PC-3 (cell line): ENCODE measurements at regions of chr5 and their contacts with region 1.

Region 1: DNA sequence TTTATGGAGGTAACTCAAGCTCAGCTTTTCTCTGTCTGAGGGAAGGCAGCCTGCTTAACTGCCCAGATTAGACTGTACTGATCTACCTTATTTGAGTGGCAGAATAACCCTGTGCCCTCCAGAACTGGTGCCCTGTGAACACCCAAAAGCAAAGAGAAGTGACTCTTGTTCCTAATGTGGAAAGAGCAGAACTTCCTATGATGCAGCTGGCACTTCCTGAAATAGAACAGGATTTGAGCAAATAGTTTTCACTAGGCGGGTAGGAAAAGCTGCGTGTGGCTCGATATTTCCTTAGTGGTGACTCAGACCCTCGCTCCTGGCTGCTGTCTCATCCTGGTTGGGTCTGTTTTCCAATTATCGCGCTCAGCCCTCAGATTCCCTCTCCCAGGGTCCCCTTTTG is 89.9 kb downstream of the SH3TC2 start:
- DNase-seq: peak; percentile 100
- ATAC-seq: peak; percentile 78
- H3K4me3 ChIP-seq: peak overlapping the region; percentile 17; the same call in 1 of the 2 replicates
- H3K27ac ChIP-seq: peak overlapping the region; percentile 90
- H3K4me1 ChIP-seq: peaks cover 83% of the 10 kb centered on the region
- H3K27me3 ChIP-seq: no peaks in the 10 kb centered on the region
- CTCF ChIP-seq: no peak

Region 2: GRCh38 chr5:148834689-148835088 is 138.3 kb before region 1 on chr5:
- CTCF ChIA-PET with region 1: no interaction called
- POLR2A ChIA-PET with region 1: no interaction called
- intact Hi-C with region 1: no loop called
- DNase-seq: no peak
- ATAC-seq: no peak
- H3K4me3 ChIP-seq: no peak overlapping the region
- H3K27ac ChIP-seq: no peak overlapping the region
- H3K4me1 ChIP-seq: peaks cover 51% of the 10 kb centered on the region
- H3K27me3 ChIP-seq: no peaks in the 10 kb centered on the region
- CTCF ChIP-seq: no peak

Region 3: GRCh38 chr5:148887123-148887881 is 85.7 kb before region 1 on chr5:
- CTCF ChIA-PET with region 1: no interaction called
- POLR2A ChIA-PET with region 1: no interaction called
- intact Hi-C with region 1: no loop called
- DNase-seq: no peak
- ATAC-seq: no peak
- H3K4me3 ChIP-seq: no peak overlapping the region
- H3K27ac ChIP-seq: no peak overlapping the region
- H3K4me1 ChIP-seq: no peaks in the 10 kb centered on the region
- H3K27me3 ChIP-seq: no peaks in the 10 kb centered on the region
- CTCF ChIP-seq: no peak

Region 4: GRCh38 chr5:148904440-148904839 is 68.5 kb before region 1 on chr5:
- CTCF ChIA-PET with region 1: no interaction called
- POLR2A ChIA-PET with region 1: no interaction called
- intact Hi-C with region 1: no loop called
- DNase-seq: no peak
- ATAC-seq: no peak
- H3K4me3 ChIP-seq: no peak overlapping the region
- H3K27ac ChIP-seq: no peak overlapping the region
- H3K4me1 ChIP-seq: peaks cover 11% of the 10 kb centered on the region
- H3K27me3 ChIP-seq: no peaks in the 10 kb centered on the region
- CTCF ChIP-seq: no peak

Region 5: GRCh38 chr5:148928141-148928540 is 44.8 kb before region 1 on chr5:
- CTCF ChIA-PET with region 1: no interaction called
- POLR2A ChIA-PET with region 1: interaction called, 11 read pairs
- intact Hi-C with region 1: no loop called
- DNase-seq: peak; percentile 33
- ATAC-seq: no peak
- H3K4me3 ChIP-seq: no peak overlapping the region
- H3K27ac ChIP-seq: no peak overlapping the region
- H3K4me1 ChIP-seq: peaks cover 18% of the 10 kb centered on the region
- H3K27me3 ChIP-seq: no peaks in the 10 kb centered on the region
- CTCF ChIP-seq: no peak

Region 6: GRCh38 chr5:148986636-148987035 is 13.7 kb after region 1 on chr5:
- CTCF ChIA-PET with region 1: no interaction called
- POLR2A ChIA-PET with region 1: interaction called, 5 read pairs
- intact Hi-C with region 1: loop called (anchors 2 kb)
- DNase-seq: no peak
- ATAC-seq: no peak
- H3K4me3 ChIP-seq: no peak overlapping the region
- H3K27ac ChIP-seq: peak overlapping the region; percentile 87
- H3K4me1 ChIP-seq: peaks cover 59% of the 10 kb centered on the region
- H3K27me3 ChIP-seq: no peaks in the 10 kb centered on the region
- CTCF ChIP-seq: no peak